K562 (cell line): ENCODE measurements at regions of chr20 and their contacts with region 1.

Region 1: DNA sequence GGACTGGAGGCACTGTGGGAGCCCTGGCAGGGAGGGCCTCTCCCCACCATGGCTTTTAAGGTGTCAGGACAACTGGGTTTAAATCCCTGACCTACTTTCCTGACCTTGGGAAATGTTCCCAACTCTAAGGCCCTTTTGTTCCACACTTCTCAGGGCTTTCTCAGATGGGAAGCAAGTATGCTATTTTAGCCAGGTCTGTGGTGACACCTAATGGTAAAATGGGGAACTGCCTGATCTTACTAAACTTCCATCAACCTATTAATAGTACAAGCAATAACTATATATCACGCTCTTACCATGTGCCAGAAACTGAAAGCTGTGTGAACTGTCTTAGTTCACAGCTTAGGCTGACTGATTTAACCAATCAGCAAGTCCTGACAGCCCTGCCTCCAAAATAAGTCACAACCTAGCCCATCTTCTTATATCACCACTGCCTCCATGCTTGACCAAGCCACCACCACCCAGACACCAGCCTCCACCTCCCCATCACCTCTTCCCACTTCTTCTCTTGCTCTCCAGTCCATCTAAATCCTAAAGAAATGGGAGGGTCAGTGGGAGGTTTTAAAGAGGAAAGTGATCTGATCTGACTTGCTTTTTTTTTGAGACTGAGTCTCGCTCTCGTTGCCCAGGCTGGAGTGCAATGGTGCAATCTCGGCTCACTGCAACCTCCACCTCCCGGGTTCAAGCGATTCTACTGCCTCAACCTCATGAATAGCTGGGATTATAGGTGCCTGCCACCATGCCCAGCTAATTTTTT is 6.9 kb upstream of the BLCAP start:
- DNase-seq: peak; percentile 47 to 79 (median 50)
- ATAC-seq: peak; percentile 89
- H3K4me3 ChIP-seq: no peak overlapping the region
- H3K27ac ChIP-seq: no peak overlapping the region
- H3K4me1 ChIP-seq: peaks cover 0 to 2% of the 10 kb centered on the region in 2 experiments; a peak in 1 of 5 replicates
- H3K27me3 ChIP-seq: no peaks in the 10 kb centered on the region; a peak in 1 of 5 replicates
- CTCF ChIP-seq: peak; percentile 66 to 95 (median 88)
- EP300 ChIP-seq: no peak
- POLR2A ChIP-seq: no peak
- RAD21 ChIP-seq: peak; percentile 84 to 89

Region 2: DNA sequence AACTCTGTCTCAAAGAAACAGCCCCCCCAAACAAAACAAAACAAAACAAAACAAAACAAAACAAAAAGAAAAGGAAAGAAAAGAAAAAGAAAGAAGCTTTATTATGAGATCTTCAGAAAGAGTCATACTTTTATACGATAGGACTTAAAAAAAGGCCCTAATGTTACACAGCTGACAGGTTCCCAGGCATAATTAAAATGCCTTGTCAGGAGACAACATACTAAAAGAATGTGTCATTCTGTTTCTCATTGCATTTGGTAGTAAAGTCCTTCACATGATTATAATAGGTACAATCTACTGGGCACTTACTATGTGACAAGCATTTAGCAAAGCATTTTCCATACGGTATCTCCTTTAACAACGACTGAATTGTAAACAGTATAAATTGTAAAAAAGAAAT is 391.9 kb before region 1 on chr20:
- CTCF ChIA-PET with region 1: no interaction called
- POLR2A ChIA-PET with region 1: no interaction called
- in situ Hi-C with region 1: no loop called
- intact Hi-C with region 1: no loop called
- DNase-seq: no peak
- ATAC-seq: no peak
- H3K4me3 ChIP-seq: no peak overlapping the region
- H3K27ac ChIP-seq: no peak overlapping the region
- H3K4me1 ChIP-seq: no peaks in the 10 kb centered on the region
- H3K27me3 ChIP-seq: peaks cover 7 to 10% of the 10 kb centered on the region in 2 experiments; a peak in 3 of 5 replicates
- CTCF ChIP-seq: no peak
- EP300 ChIP-seq: no peak
- POLR2A ChIP-seq: no peak
- RAD21 ChIP-seq: no peak

Region 3: DNA sequence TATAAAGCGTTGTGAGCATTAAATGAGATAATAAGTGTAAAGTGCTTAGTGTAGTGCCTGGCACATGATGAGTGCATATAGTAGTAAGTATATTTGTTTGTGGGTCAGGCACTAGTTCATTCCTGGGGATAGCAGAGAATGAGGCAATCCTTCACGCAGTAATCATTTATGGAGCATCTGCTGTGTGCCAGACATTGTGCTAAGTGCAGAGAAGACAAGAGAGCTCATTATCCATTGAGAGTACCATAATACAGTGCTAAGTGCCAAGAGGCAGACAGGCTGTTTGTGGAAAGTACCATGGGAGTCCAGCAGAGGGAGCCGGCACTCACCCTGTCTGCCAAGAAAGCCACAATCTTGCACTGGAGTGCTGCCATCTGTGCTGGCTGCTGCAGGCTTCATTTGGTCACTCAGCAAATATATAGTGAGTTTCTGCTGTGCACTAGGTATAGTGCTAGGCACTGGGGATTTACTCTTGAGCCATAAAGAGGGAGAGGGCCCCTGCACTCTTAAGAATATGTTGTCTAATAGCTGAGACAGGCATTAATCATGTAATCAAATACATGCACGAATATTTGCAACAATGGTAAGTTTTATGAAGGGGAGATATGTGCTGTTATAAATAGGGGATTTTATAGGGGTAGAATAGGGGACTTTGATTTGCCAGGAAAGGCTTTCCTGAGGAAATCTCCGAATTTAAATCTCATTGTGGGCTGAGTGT is 342.3 kb before region 1 on chr20:
- CTCF ChIA-PET with region 1: interaction called, 18 read pairs
- POLR2A ChIA-PET with region 1: interaction called, 3 read pairs
- in situ Hi-C with region 1: loop called (anchors 5 kb)
- intact Hi-C with region 1: loop called (anchors 1 kb)
- DNase-seq: peak; percentile 73 to 82 (median 78)
- ATAC-seq: peak; percentile 94
- H3K4me3 ChIP-seq: no peak overlapping the region
- H3K27ac ChIP-seq: no peak overlapping the region
- H3K4me1 ChIP-seq: peaks cover 0 to 2% of the 10 kb centered on the region in 2 experiments; a peak in 1 of 5 replicates
- H3K27me3 ChIP-seq: no peaks in the 10 kb centered on the region
- CTCF ChIP-seq: peak; percentile 86 to 93 (median 88)
- EP300 ChIP-seq: no peak
- POLR2A ChIP-seq: no peak
- RAD21 ChIP-seq: peak; percentile 37 to 49; a peak in 3 of 4 replicates

Region 4: GRCh38 chr20:37202267-37202943 is 332.2 kb before region 1 on chr20:
- CTCF ChIA-PET with region 1: interaction called, 14 read pairs
- POLR2A ChIA-PET with region 1: no interaction called
- in situ Hi-C with region 1: loop called (anchors 5 kb)
- intact Hi-C with region 1: loop called (anchors 1 kb)
- DNase-seq: peak; percentile 48 to 59 (median 56)
- ATAC-seq: peak; percentile 82
- H3K4me3 ChIP-seq: no peak overlapping the region
- H3K27ac ChIP-seq: no peak overlapping the region
- H3K4me1 ChIP-seq: no peaks in the 10 kb centered on the region
- H3K27me3 ChIP-seq: no peaks in the 10 kb centered on the region
- CTCF ChIP-seq: peak; percentile 52 to 71 (median 71)
- EP300 ChIP-seq: no peak
- POLR2A ChIP-seq: no peak
- RAD21 ChIP-seq: peak; percentile 44 to 45

Region 5: GRCh38 chr20:37251825-37252477 is 282.6 kb before region 1 on chr20:
- CTCF ChIA-PET with region 1: no interaction called
- POLR2A ChIA-PET with region 1: interaction called, 3 read pairs
- in situ Hi-C with region 1: loop called (anchors 10 kb)
- intact Hi-C with region 1: no loop called
- DNase-seq: no peak
- ATAC-seq: no peak
- H3K4me3 ChIP-seq: no peak overlapping the region
- H3K27ac ChIP-seq: no peak overlapping the region
- H3K4me1 ChIP-seq: peaks cover 0 to 4% of the 10 kb centered on the region in 2 experiments; a peak in 2 of 5 replicates
- H3K27me3 ChIP-seq: peaks cover 19 to 43% of the 10 kb centered on the region in 2 experiments
- CTCF ChIP-seq: no peak
- EP300 ChIP-seq: no peak
- POLR2A ChIP-seq: no peak
- RAD21 ChIP-seq: no peak

Region 6: GRCh38 chr20:37265152-37265551 is 269.4 kb before region 1 on chr20:
- CTCF ChIA-PET with region 1: interaction called, 19 read pairs
- POLR2A ChIA-PET with region 1: interaction called, 4 read pairs
- in situ Hi-C with region 1: loop called (anchors 5 kb)
- intact Hi-C with region 1: loop called (anchors 5 kb)
- DNase-seq: no peak
- ATAC-seq: no peak
- H3K4me3 ChIP-seq: no peak overlapping the region
- H3K27ac ChIP-seq: no peak overlapping the region
- H3K4me1 ChIP-seq: peaks cover 4 to 8% of the 10 kb centered on the region in 2 experiments
- H3K27me3 ChIP-seq: peaks cover 9 to 29% of the 10 kb centered on the region in 2 experiments; a peak in 4 of 5 replicates
- CTCF ChIP-seq: no peak
- EP300 ChIP-seq: no peak
- POLR2A ChIP-seq: no peak
- RAD21 ChIP-seq: no peak

Region 7: GRCh38 chr20:37270576-37271420 is 263.8 kb before region 1 on chr20:
- CTCF ChIA-PET with region 1: interaction called, 19 read pairs
- POLR2A ChIA-PET with region 1: interaction called, 3 read pairs
- in situ Hi-C with region 1: loop called (anchors 5 kb)
- intact Hi-C with region 1: loop called (anchors 5 kb)
- DNase-seq: peak in 1 of 4 experiments; percentile 55
- ATAC-seq: peak; percentile 75
- H3K4me3 ChIP-seq: no peak overlapping the region
- H3K27ac ChIP-seq: peak overlapping the region; percentile 63
- H3K4me1 ChIP-seq: peaks cover 19 to 23% of the 10 kb centered on the region in 2 experiments
- H3K27me3 ChIP-seq: no peaks in the 10 kb centered on the region; a peak in 2 of 5 replicates
- CTCF ChIP-seq: no peak
- EP300 ChIP-seq: no peak
- POLR2A ChIP-seq: no peak
- RAD21 ChIP-seq: no peak

Region 8: DNA sequence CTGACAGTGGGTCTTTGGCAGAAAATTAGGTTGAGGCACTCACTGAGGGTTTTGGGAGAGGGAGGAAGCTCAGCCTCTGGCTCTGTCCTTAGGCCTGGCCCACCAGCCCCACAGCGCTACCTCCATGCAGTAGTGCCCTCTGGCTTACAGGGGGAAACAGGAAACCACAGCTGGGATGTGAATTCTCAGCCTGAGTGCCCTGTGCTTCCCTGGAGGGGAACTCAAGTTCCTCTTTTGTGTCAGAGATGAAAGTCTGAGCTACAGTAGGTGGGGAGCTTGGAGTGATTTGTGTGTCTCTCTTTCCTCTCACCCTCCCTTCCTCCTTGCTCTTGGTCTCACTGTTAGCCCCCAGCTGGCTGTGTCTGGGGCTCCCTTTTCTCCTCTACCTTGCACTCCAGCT is 41.3 kb after region 1 on chr20:
- CTCF ChIA-PET with region 1: no interaction called
- POLR2A ChIA-PET with region 1: no interaction called
- in situ Hi-C with region 1: no loop called
- intact Hi-C with region 1: no loop called
- DNase-seq: no peak
- ATAC-seq: no peak; the same call in 2 of the 3 replicates
- H3K4me3 ChIP-seq: no peak overlapping the region
- H3K27ac ChIP-seq: no peak overlapping the region
- H3K4me1 ChIP-seq: no peaks in the 10 kb centered on the region
- H3K27me3 ChIP-seq: peaks cover 2 to 13% of the 10 kb centered on the region in 2 experiments; a peak in 4 of 5 replicates
- CTCF ChIP-seq: no peak
- EP300 ChIP-seq: no peak
- POLR2A ChIP-seq: no peak
- RAD21 ChIP-seq: no peak